Activated T-helper 1 cell treated with anti-CD3 and anti-CD28 coated beads, Interleukin-12 subunit alpha, Interleukin-12 subunit beta, Interleukin-2, Interleukin-4 antibody, amounts not matched to agents 30 ng/mL and 10 ng/mL and 1 ng/mL, durations not matched to agents 14 hours and 24 hours and 36 hours (primary cell): ENCODE measurements at regions of chr1 and their contacts with region 1.

Region 1: DNA sequence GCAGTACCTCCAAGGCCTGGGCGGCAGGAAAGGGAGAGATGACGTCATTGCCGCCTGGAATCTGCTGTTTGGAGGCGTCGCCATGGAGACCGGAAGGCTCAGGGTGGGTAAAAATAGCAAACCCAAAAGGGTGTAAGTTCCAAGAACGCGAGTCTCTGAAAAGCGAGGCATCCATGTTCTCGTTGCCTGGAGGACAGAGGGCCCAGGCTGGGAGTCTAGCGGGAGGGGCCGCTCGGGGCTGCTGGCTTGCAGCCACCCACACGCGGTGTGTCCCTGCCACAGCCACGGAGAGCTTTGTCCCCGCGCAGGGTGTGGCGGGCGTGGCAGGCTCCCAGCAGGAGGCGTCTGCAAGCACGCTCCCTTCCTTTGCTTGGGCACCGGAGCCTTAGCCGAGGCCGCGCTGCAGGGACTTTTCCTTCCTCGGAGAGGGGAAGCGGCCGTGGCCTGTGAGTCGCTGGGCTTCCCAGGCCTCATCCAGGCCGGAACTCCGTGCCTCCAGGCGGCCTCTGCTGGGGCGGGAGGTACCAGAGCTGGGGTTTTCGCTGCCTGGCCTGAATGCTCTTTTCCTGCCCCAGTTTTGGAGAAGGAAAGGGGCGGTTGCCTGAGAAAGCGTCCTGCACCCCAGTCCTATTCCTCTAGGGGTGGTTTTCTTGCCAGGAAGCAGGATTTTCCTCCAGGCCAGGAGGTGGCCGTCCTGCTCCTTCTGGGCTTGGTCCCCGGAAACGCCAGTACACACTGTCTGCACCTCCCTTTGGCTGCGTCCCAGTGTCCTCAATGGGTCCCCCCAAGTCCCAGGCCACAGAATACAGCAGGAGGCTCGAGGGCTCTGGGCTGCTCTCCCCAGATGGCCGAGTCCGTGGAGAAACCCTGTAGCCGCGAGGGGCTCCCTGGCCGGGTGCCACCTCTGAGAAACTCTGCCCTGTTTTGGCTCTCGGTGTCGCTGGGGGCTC is 15.3 kb upstream of the SKI start:
- DNase-seq: peak; percentile 52
- H3K4me3 Mint-ChIP-seq: no peak overlapping the region
- H3K27ac Mint-ChIP-seq: no peak overlapping the region
- H3K4me1 Mint-ChIP-seq: no peaks in the 10 kb centered on the region
- H3K27me3 Mint-ChIP-seq: no peaks in the 10 kb centered on the region

Region 2: GRCh38 chr1:2227346-2228153 is 14.7 kb after region 1 on chr1:
- intact Hi-C with region 1: loop called (anchors 2 kb)
- DNase-seq: peak; percentile 96
- H3K4me3 Mint-ChIP-seq: peak overlapping the region; percentile 73
- H3K27ac Mint-ChIP-seq: peak overlapping the region; percentile 80
- H3K4me1 Mint-ChIP-seq: peaks cover 26% of the 10 kb centered on the region
- H3K27me3 Mint-ChIP-seq: peaks cover 13% of the 10 kb centered on the region